HEK293 (cell line): ENCODE measurements at regions of chr6 and their contacts with region 1.

Region 1: GRCh38 chr6:88919032-88919431 is 44.4 kb downstream of the RNGTT start:
- H3K4me3 ChIP-seq: no peak overlapping the region
- H3K27ac ChIP-seq: no peak overlapping the region
- H3K4me1 ChIP-seq: peaks cover 8% of the 10 kb centered on the region; the same call in 1 of the 2 replicates
- CTCF ChIP-seq: 0 out of 2 replicates have a peak, but pooled peaks have one; percentile 21

Region 2: GRCh38 chr6:88899569-88900316 is 19.3 kb before region 1 on chr6:
- CTCF ChIA-PET with region 1: interaction called, 14 read pairs
- POLR2A ChIA-PET with region 1: no interaction called
- H3K4me3 ChIP-seq: no peak overlapping the region
- H3K27ac ChIP-seq: no peak overlapping the region
- H3K4me1 ChIP-seq: no peaks in the 10 kb centered on the region
- CTCF ChIP-seq: no peak

Region 3: GRCh38 chr6:89002523-89002922 is 83.5 kb after region 1 on chr6:
- CTCF ChIA-PET with region 1: no interaction called
- POLR2A ChIA-PET with region 1: no interaction called
- H3K4me3 ChIP-seq: no peak overlapping the region
- H3K27ac ChIP-seq: no peak overlapping the region
- H3K4me1 ChIP-seq: peaks cover 7% of the 10 kb centered on the region
- CTCF ChIP-seq: no peak